K562 (cell line): ENCODE measurements at regions of chr18 and their contacts with region 1.

Region 1: GRCh38 chr18:9782073-9782857 is 74.2 kb downstream of the RAB31 start:
- DNase-seq: no peak
- ATAC-seq: no peak; the same call in 1 of the 3 replicates
- H3K4me3 ChIP-seq: no peak overlapping the region
- H3K27ac ChIP-seq: no peak overlapping the region
- H3K4me1 ChIP-seq: peaks cover 2 to 4% of the 10 kb centered on the region in 2 experiments; a peak in 2 of 5 replicates
- H3K27me3 ChIP-seq: no peaks in the 10 kb centered on the region
- CTCF ChIP-seq: no peak
- EP300 ChIP-seq: no peak
- POLR2A ChIP-seq: no peak
- RAD21 ChIP-seq: no peak

Region 2: DNA sequence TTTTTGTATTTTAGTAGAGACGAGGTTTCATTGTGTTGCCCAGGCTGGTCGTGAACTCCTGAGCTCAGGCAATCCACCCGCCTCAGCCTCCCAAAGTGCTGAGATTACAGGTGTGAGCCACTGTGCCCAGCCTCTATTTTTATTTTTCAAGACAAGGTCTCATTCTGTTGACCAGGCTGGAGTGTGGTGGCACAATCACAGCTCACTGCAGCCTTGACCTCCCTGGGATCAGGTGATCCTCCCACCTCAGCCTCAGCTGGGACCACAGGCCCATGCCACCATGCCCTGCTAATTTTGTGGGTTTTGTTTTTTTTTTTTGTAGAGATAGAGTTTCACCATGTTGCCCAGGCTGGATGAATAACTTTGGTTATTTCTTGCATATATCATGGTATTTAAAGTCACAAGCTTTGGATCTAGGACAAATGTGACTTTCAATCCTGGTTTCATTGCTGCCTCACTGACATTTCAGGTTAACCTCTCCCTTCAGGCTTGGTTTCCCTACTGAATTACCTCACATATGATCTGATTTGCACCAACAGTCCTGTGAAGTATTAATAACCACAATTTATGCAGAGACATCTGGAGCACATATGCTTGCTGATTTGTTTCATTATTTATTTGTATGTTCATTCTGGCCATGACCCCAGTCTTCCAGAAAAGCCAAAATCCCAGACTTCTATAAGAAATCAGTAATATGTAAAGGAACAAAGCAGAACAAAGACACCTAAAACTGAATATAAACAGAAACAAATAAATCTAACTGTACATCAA is 91.7 kb before region 1 on chr18:
- CTCF ChIA-PET with region 1: no interaction called
- POLR2A ChIA-PET with region 1: no interaction called
- in situ Hi-C with region 1: loop called (anchors 5 kb)
- intact Hi-C with region 1: no loop called
- DNase-seq: no peak
- ATAC-seq: no peak
- H3K4me3 ChIP-seq: no peak overlapping the region
- H3K27ac ChIP-seq: no peak overlapping the region
- H3K4me1 ChIP-seq: peaks cover 4 to 14% of the 10 kb centered on the region in 2 experiments; a peak in 3 of 5 replicates
- H3K27me3 ChIP-seq: no peaks in the 10 kb centered on the region
- CTCF ChIP-seq: no peak
- EP300 ChIP-seq: no peak
- POLR2A ChIP-seq: no peak
- RAD21 ChIP-seq: no peak